ENCODE measurements at regions of chr10 and their contacts with region 1.

Region 1: DNA sequence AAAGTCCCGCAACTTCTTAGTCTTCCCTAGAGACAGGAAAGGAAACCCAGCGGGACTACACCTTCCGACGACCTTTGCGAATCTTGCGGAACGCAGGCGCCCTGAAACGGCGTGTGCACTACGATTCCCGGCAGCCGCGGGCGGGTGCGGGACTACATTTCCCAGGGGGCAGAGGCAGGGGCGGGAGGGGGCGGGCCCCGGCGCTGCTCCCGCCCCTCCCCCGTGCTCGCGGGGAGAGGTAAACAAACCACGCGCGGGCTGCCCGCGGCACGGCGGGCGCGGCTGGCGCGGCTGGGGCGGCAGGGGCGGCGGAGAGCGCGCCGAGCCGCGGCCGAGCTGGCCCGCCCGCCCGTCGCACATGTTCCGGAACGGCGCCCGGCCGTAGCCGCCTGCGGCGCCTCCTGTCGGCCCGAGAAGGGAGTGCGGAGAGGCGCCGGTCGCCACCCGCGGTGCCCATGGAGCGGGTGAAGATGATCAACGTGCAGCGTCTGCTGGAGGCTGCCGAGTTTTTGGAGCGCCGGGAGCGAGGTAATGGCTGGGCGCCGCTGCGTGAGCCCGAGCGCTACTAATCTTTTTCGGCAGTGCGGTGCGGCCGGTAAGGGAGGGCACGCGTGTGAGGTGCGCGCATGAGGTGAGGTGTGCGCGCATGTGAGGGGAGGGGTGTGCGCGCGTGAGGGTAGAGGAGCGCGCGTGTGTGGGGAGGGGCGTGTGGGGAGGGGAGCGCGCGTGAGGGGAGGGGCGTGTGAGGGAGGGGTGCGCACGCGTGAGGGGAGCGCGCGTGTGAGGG is 18.5 kb downstream of the MXI1 start:
- DNase-seq: peak; percentile 92
- ATAC-seq: peak; percentile 83
- H3K4me3 ChIP-seq: peak overlapping the region; percentile 56 to 63
- H3K27ac ChIP-seq: peak overlapping the region; percentile 93
- H3K4me1 ChIP-seq: peaks cover 24 to 34% of the 10 kb centered on the region in 2 experiments
- H3K27me3 ChIP-seq: no peaks in the 10 kb centered on the region
- CTCF ChIP-seq: peak in 2 of 3 experiments; percentile 64 to 82; a peak in 4 of 6 replicates
- POLR2A ChIP-seq: no peak
- RAD21 ChIP-seq: no peak

Region 2: DNA sequence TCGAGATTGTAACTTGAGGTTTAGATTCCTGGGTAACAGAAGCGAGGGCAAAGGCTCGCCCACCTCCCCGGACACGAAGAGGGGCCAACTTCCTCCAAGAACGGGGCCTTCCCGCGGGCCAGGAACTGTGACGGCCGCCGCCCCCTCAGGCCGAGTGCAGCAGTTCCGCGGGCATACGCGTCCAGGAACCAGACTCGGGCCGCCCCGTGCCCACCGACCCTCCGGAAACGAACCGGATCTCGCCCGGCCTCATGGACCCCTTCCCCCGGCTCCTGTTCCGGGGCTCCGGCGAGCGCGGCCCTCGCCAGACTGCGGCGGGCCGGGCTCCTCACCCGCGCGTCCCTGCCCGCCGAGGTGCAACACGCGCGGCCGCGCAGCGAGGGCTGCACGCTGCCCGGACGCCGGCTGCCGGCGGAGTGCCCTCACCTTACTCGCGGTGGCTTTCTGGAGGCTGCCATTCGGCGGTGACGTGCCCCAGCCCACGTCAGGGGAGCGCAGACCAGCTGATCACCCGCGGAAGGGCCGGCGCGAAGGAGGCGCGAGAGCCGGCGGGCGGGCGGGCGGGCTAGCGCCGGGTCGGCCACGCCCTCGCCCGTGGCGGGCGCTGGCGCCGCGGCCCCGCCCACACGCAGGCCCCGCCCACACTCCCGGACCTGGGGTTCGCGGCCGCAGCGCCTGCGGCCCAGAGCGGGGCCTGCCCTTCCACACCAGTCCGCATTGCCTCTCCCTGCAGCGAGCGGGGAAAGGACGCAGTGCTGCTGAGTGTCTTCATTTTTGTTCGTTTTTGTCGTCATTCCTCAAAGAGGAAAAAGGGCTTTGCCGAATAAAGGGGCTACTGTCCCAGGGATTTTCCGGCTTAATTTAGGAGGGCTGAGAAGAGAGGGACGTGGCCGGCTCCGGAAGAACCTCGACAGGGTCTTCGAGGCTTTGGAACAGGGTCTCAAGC is 302.7 kb before region 1 on chr10 and contains the start of gene XPNPEP1:
- CTCF ChIA-PET with region 1: no interaction called
- POLR2A ChIA-PET with region 1: no interaction called
- RAD21 ChIA-PET with region 1: no interaction called
- intact Hi-C with region 1: loop called (anchors 10 kb)
- DNase-seq: peak; percentile 60
- ATAC-seq: peak; percentile 95
- H3K4me3 ChIP-seq: peak within 1 kb of the TSS; percentile 88 to 92
- H3K27ac ChIP-seq: peak within 1 kb of the TSS; percentile 70
- H3K4me1 ChIP-seq: peaks cover 12 to 21% of the 10 kb centered on the region in 2 experiments; a peak in 3 of 4 replicates
- H3K27me3 ChIP-seq: no peaks in the 10 kb centered on the region
- CTCF ChIP-seq: no peak
- POLR2A ChIP-seq: peak; percentile 93
- RAD21 ChIP-seq: no peak
- total RNA-seq, gene XPNPEP1: 87.3 TPM

Region 3: GRCh38 chr10:110175416-110175815 is 50.5 kb before region 1 on chr10:
- CTCF ChIA-PET with region 1: no interaction called
- POLR2A ChIA-PET with region 1: no interaction called
- RAD21 ChIA-PET with region 1: no interaction called
- intact Hi-C with region 1: no loop called
- DNase-seq: no peak
- ATAC-seq: peak; percentile 32; the same call in 1 of the 2 replicates
- H3K4me3 ChIP-seq: no peak overlapping the region
- H3K27ac ChIP-seq: no peak overlapping the region
- H3K4me1 ChIP-seq: peaks cover 0 to 10% of the 10 kb centered on the region in 2 experiments; a peak in 2 of 4 replicates
- H3K27me3 ChIP-seq: no peaks in the 10 kb centered on the region
- CTCF ChIP-seq: no peak
- POLR2A ChIP-seq: no peak
- RAD21 ChIP-seq: no peak

Region 4: GRCh38 chr10:110252151-110252550 is 26.2 kb after region 1 on chr10:
- CTCF ChIA-PET with region 1: no interaction called
- POLR2A ChIA-PET with region 1: no interaction called
- RAD21 ChIA-PET with region 1: no interaction called
- intact Hi-C with region 1: no loop called
- DNase-seq: no peak
- ATAC-seq: no peak
- H3K4me3 ChIP-seq: no peak overlapping the region
- H3K27ac ChIP-seq: no peak overlapping the region
- H3K4me1 ChIP-seq: no peaks in the 10 kb centered on the region
- H3K27me3 ChIP-seq: no peaks in the 10 kb centered on the region
- CTCF ChIP-seq: no peak
- POLR2A ChIP-seq: no peak
- RAD21 ChIP-seq: no peak

Region 5: DNA sequence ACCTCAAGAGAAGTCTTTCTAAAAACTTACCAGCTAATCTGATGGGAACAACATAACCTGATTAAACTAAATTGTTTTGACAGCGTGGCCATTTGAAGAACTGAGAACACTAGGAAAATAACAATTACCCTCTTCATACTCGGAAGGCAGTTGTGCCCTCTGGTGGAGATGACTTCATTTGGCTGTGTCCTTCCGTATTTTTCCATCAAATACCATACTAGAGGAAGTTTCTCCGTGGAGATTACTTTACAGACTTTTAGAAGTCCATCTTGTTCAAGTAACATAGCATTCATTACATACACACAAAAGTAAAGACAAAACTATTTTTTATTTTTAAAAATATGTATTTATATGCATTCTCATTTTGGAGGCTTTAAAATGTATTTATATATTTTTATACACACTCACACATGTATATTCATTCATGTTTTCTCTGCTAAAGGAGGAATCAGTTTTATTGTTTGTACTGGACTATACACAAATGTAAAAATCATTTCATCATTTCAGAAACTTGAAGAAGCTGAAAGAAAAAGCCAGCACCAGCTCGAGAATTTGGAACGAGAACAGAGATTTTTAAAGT is 53.5 kb after region 1 on chr10:
- CTCF ChIA-PET with region 1: interaction called, 3 read pairs
- POLR2A ChIA-PET with region 1: no interaction called
- RAD21 ChIA-PET with region 1: no interaction called
- intact Hi-C with region 1: loop called (anchors 5 kb)
- DNase-seq: peak; percentile 54
- ATAC-seq: peak; percentile 86
- H3K4me3 ChIP-seq: no peak overlapping the region
- H3K27ac ChIP-seq: no peak overlapping the region
- H3K4me1 ChIP-seq: peaks cover 0 to 3% of the 10 kb centered on the region in 2 experiments; a peak in 1 of 4 replicates
- H3K27me3 ChIP-seq: no peaks in the 10 kb centered on the region
- CTCF ChIP-seq: peak; percentile 79 to 94 (median 91)
- POLR2A ChIP-seq: no peak
- RAD21 ChIP-seq: peak; percentile 95

Measured in HCT116 (cell line).